ENCODE measurements at regions of chr14 and their contacts with region 1.

Region 1: DNA sequence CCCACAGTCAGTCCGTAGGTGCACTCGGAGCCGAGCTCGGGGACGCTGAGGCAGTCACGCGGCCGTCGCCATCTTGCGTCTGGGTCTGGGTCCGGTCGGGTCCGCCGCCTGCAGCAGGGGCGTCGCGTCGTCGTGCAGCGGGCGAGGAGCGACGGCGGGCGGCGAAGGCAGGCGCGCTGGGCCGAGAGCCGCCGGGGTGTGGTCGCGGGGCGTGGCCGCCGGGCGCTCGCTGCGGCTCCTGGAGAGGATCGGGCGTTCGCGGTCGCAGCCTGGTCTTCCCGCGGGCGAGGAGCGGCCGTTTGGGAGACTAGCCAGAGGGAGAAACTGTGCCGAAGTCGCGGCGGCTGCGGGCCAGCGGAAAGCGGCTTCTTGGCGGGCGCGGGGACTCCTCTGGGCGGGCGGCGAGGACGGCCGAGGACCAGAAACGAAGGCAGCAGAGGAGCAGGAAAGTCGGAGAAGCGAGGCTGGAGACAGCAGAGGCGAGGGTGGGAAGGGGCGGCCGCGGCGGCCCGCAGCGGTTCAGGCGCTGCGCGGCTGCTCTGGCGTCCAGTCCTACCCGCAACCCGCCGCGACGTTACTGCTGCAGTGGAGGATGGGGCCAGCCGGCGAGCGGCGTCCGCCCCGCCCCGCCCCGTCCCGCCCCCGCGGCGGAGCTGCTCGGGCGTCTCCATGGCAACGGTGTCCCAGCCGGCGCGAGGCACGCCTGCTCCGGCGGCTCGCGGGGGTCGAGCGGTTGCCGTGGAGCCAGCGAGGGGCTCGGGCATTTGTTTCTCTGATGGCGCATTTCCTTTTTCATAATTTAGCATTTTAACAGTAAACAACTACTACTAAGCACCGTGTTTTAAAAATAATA is at the start of gene PNMA1:
- DNase-seq: peak; percentile 84 to 87 (median 85)
- H3K4me3 ChIP-seq: peak within 1 kb of the TSS; percentile 92 to 96
- H3K4me3 Mint-ChIP-seq: peak within 1 kb of the TSS; percentile 89 to 100 (median 98)
- H3K27ac ChIP-seq: peak within 1 kb of the TSS; percentile 80
- H3K27ac Mint-ChIP-seq: peak within 1 kb of the TSS; percentile 89 to 99 (median 95)
- H3K4me1 ChIP-seq: peaks cover 26% of the 10 kb centered on the region
- H3K4me1 Mint-ChIP-seq: peaks cover 18 to 35% (median 24%) of the 10 kb centered on the region in 4 donors
- H3K27me3 ChIP-seq: no peaks in the 10 kb centered on the region
- H3K27me3 Mint-ChIP-seq: no peaks in the 10 kb centered on the region
- total RNA-seq, gene PNMA1: 53.3 to 59.3 TPM

Region 2: GRCh38 chr14:73613046-73613383 is 101.0 kb before region 1 on chr14:
- CTCF ChIA-PET with region 1: no interaction called
- POLR2A ChIA-PET with region 1: interaction called, 14 read pairs
- intact Hi-C with region 1: no loop called
- DNase-seq: no peak
- H3K4me3 ChIP-seq: peak overlapping the region; percentile 28 to 82
- H3K4me3 Mint-ChIP-seq: peak overlapping the region; percentile 85 to 90 (median 87)
- H3K27ac ChIP-seq: peak overlapping the region; percentile 40
- H3K27ac Mint-ChIP-seq: peak overlapping the region; percentile 46 to 91 (median 75)
- H3K4me1 ChIP-seq: peaks cover 3% of the 10 kb centered on the region
- H3K4me1 Mint-ChIP-seq: peaks cover 0 to 6% (median 3%) of the 10 kb centered on the region in 4 donors
- H3K27me3 ChIP-seq: no peaks in the 10 kb centered on the region
- H3K27me3 Mint-ChIP-seq: no peaks in the 10 kb centered on the region

Region 3: DNA sequence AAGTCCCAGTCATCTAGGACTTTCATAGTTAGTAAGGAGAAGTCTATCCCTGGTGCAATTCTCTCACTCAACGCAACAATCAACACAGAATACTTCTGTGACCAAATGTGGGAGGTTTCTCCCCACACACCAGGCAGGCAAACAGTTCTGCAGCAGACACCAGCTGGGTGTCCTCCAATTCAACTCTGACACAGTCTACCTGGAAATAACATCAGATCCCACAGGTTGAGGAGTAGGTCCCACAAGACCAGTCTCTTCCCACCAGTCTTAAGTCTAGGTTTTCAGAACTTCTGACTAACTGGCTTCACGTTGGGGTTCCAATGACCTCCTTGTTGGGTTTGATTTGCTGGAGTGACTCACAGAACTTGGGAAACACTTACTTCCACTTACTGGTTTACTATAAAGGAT is 86.9 kb before region 1 on chr14:
- CTCF ChIA-PET with region 1: no interaction called
- POLR2A ChIA-PET with region 1: no interaction called
- intact Hi-C with region 1: no loop called
- DNase-seq: no peak
- H3K4me3 ChIP-seq: no peak overlapping the region
- H3K4me3 Mint-ChIP-seq: no peak overlapping the region
- H3K27ac ChIP-seq: no peak overlapping the region
- H3K27ac Mint-ChIP-seq: no peak overlapping the region
- H3K4me1 ChIP-seq: no peaks in the 10 kb centered on the region
- H3K4me1 Mint-ChIP-seq: no peaks in the 10 kb centered on the region
- H3K27me3 ChIP-seq: no peaks in the 10 kb centered on the region
- H3K27me3 Mint-ChIP-seq: peaks cover 2 to 10% of the 10 kb centered on the region in 2 donors

Region 4: GRCh38 chr14:73663548-73664212 is 50.3 kb before region 1 on chr14:
- CTCF ChIA-PET with region 1: no interaction called
- POLR2A ChIA-PET with region 1: no interaction called
- intact Hi-C with region 1: no loop called
- DNase-seq: no peak
- H3K4me3 ChIP-seq: no peak overlapping the region
- H3K4me3 Mint-ChIP-seq: peak overlapping the region in 1 of 8 donors; percentile 57
- H3K27ac ChIP-seq: no peak overlapping the region
- H3K27ac Mint-ChIP-seq: no peak overlapping the region
- H3K4me1 ChIP-seq: no peaks in the 10 kb centered on the region
- H3K4me1 Mint-ChIP-seq: no peaks in the 10 kb centered on the region
- H3K27me3 ChIP-seq: no peaks in the 10 kb centered on the region
- H3K27me3 Mint-ChIP-seq: no peaks in the 10 kb centered on the region

Region 5: GRCh38 chr14:73741386-73741875 is 27.4 kb after region 1 on chr14:
- CTCF ChIA-PET with region 1: no interaction called
- POLR2A ChIA-PET with region 1: interaction called, 33 read pairs
- intact Hi-C with region 1: loop called (anchors 2 kb)
- DNase-seq: peak; percentile 56 to 87 (median 62)
- H3K4me3 ChIP-seq: peak overlapping the region; percentile 36 to 49
- H3K4me3 Mint-ChIP-seq: peak overlapping the region; percentile 79 to 90 (median 86)
- H3K27ac ChIP-seq: peak overlapping the region; percentile 66
- H3K27ac Mint-ChIP-seq: peak overlapping the region; percentile 93 to 98 (median 95)
- H3K4me1 ChIP-seq: peaks cover 77% of the 10 kb centered on the region
- H3K4me1 Mint-ChIP-seq: peaks cover 50 to 73% (median 61%) of the 10 kb centered on the region in 4 donors
- H3K27me3 ChIP-seq: no peaks in the 10 kb centered on the region
- H3K27me3 Mint-ChIP-seq: no peaks in the 10 kb centered on the region

Region 6: GRCh38 chr14:73825551-73826188 is 111.6 kb after region 1 on chr14:
- CTCF ChIA-PET with region 1: interaction called, 5 read pairs
- POLR2A ChIA-PET with region 1: no interaction called
- intact Hi-C with region 1: loop called (anchors 1 kb)
- DNase-seq: peak; percentile 68 to 75 (median 74)
- H3K4me3 ChIP-seq: no peak overlapping the region
- H3K4me3 Mint-ChIP-seq: no peak overlapping the region
- H3K27ac ChIP-seq: no peak overlapping the region
- H3K27ac Mint-ChIP-seq: peak overlapping the region in 1 of 7 donors; percentile 42
- H3K4me1 ChIP-seq: peaks cover 13% of the 10 kb centered on the region
- H3K4me1 Mint-ChIP-seq: peaks cover 7 to 11% (median 10%) of the 10 kb centered on the region in 4 donors
- H3K27me3 ChIP-seq: no peaks in the 10 kb centered on the region
- H3K27me3 Mint-ChIP-seq: no peaks in the 10 kb centered on the region

Measured in CD4-positive, alpha-beta memory T cell (primary cell).